Head of caudate nucleus (tissue), 42 donors: ENCODE measurements at regions of chr3 and their contacts with region 1.

Region 1: DNA sequence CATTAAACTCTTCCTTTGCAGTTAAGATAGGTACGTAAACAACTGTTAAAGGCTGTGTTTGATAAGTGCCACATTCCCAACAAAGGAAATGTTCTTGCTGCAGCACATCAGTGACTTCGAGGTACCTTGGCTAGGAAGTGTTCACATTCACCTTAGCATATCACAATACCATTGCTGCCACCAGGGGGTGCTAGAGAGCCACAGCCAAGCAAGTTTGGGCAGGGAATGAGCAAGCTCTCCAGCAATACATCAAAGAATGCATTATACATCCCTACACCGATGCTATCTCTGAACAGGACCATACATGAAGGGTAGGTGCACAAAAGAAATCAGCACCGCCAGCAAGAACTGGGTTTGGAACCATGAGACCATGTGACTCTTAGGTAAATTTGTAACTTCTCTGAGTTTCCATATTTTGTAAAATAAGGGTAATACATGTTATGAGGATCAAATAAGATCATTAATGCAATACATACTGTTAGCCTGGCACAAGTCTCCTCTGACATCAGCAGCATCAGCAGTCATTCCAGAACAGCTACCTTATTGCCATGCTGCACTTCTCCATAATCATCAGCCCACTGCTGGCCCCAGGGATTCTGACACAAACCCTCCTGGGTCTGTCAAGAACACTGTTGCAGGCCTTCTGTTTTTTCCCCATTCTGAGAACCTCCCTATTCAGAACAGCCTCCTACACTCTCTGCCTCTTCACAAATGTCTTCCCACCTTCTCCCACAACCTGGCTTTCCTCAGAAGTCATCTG is 37.6 kb downstream of the RYK start:
- DNase-seq: peak; percentile 47 to 96 (median 90)

Region 2: DNA sequence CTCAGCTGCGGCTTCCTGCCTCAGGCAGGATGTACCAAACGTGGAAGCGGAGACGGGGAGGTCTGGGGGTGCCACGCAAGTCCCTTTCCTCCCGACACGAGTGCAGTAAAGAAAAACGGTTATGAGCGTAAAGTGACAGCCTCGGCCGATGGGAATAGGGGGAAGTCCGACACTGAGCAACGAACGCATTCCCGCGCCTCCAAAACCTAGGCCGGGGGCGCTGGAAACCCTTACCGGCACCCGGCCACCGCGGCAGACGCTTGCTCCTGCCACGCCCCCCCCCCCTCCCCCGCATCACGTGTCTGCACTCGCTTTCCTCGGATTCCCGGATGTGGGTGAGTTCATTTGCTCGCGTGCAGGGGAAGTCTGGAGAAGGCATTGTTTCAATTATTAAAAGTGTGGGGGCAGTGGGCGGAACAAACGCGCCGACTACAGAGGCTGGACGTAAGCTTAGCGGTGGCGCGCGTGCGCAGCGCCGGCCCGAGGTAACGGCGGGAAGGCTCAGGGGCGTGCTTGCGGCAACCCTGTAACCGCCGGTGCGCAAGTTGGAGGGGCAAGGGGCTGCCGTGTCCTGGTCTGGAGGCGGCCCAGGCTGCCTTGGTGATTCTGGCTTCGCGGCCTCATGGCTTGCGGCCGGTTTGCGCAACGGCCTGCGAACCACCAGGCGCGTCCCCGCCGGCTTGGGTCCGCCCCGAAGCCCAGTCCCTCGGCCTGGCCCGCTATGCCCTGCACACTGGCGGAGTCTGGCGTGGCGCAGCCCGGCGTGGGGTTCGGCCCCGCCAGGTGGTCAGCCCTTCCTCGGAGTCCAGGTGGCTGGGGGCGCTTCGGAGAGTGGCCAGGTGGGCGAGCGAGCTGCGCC is 272.9 kb after region 1 on chr3 and contains the starts of genes ANAPC13 and CEP63:
- intact Hi-C with region 1: loop called (anchors 5 kb)
- DNase-seq: peak; percentile 86 to 97 (median 92)